GM12878 (cell line): ENCODE measurements at regions of chrX and their contacts with region 1.

Region 1: DNA sequence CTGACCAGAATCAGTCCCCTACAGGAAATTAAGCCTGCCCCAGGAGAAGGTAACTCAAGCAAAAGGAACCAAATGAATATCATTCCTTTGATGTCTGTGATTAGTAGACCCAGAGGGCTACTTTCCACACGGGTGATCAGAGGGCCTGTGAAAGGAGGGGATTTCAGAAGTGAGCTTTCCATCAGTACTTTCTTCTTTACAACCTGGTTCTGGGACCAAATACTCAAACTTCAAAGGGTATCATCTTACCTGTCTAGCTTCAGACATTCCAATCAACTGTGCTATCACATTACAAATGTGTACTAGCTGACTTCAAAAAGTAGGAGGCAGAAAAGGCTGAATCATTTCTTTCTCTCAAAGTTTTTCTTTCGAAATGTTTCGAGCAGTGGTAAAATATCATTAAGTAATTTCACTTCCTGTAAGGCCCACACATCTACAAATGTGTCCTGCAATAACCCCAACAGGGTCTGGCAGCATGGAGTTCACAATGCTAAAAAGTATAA is 23.9 kb downstream of the ACSL4 start:
- DNase-seq: peak; percentile 60
- ATAC-seq: peak; percentile 82
- H3K4me3 ChIP-seq: 0 out of 2 replicates have a peak overlapping the region, but pooled peaks have one; percentile 29
- H3K27ac ChIP-seq: peak overlapping the region; percentile 71
- H3K4me1 ChIP-seq: peaks cover 9% of the 10 kb centered on the region
- H3K27me3 ChIP-seq: no peaks in the 10 kb centered on the region
- CTCF ChIP-seq: no peak; a peak in 1 of 6 replicates
- EP300 ChIP-seq: peak in 1 of 2 experiments; percentile 59; a peak in 2 of 4 replicates
- POLR2A ChIP-seq: no peak
- RAD21 ChIP-seq: no peak

Region 2: GRCh38 chrX:109679820-109680219 is 29.4 kb before region 1 on chrX:
- CTCF ChIA-PET with region 1: interaction called, 3 read pairs
- POLR2A ChIA-PET with region 1: no interaction called
- RAD21 ChIA-PET with region 1: no interaction called
- SMC1A ChIA-PET with region 1: interaction called, 12 read pairs
- in situ Hi-C with region 1: no loop called
- intact Hi-C with region 1: no loop called
- DNase-seq: no peak
- ATAC-seq: no peak
- H3K4me3 ChIP-seq: no peak overlapping the region
- H3K27ac ChIP-seq: no peak overlapping the region
- H3K4me1 ChIP-seq: no peaks in the 10 kb centered on the region
- H3K27me3 ChIP-seq: no peaks in the 10 kb centered on the region
- CTCF ChIP-seq: no peak
- EP300 ChIP-seq: no peak
- POLR2A ChIP-seq: no peak
- RAD21 ChIP-seq: no peak

Region 3: GRCh38 chrX:109732780-109733657 is 23.8 kb after region 1 on chrX and contains the start of gene ACSL4:
- CTCF ChIA-PET with region 1: interaction called, 15 read pairs
- POLR2A ChIA-PET with region 1: interaction called, 8 read pairs
- RAD21 ChIA-PET with region 1: interaction called, 28 read pairs
- SMC1A ChIA-PET with region 1: interaction called, 18 read pairs
- in situ Hi-C with region 1: no loop called
- intact Hi-C with region 1: no loop called
- DNase-seq: no peak
- ATAC-seq: peak; percentile 91
- H3K4me3 ChIP-seq: peak within 1 kb of the TSS; percentile 69
- H3K27ac ChIP-seq: peak within 1 kb of the TSS; percentile 88
- H3K4me1 ChIP-seq: no peaks in the 10 kb centered on the region
- H3K27me3 ChIP-seq: no peaks in the 10 kb centered on the region
- CTCF ChIP-seq: no peak
- EP300 ChIP-seq: no peak
- POLR2A ChIP-seq: peak; percentile 84
- RAD21 ChIP-seq: no peak
- polyA plus RNA-seq, gene ACSL4: 20.7 to 23.6 TPM

Region 4: GRCh38 chrX:109840585-109840984 is 131.4 kb after region 1 on chrX:
- CTCF ChIA-PET with region 1: interaction called, 6 read pairs
- POLR2A ChIA-PET with region 1: interaction called, 3 read pairs
- RAD21 ChIA-PET with region 1: interaction called, 20 read pairs
- SMC1A ChIA-PET with region 1: interaction called, 11 read pairs
- in situ Hi-C with region 1: no loop called
- intact Hi-C with region 1: no loop called
- DNase-seq: no peak
- ATAC-seq: peak; percentile 36
- H3K4me3 ChIP-seq: no peak overlapping the region
- H3K27ac ChIP-seq: no peak overlapping the region
- H3K4me1 ChIP-seq: peaks cover 6% of the 10 kb centered on the region; the same call in 1 of the 2 replicates
- H3K27me3 ChIP-seq: no peaks in the 10 kb centered on the region
- CTCF ChIP-seq: no peak
- EP300 ChIP-seq: no peak
- POLR2A ChIP-seq: no peak
- RAD21 ChIP-seq: no peak

Region 5: DNA sequence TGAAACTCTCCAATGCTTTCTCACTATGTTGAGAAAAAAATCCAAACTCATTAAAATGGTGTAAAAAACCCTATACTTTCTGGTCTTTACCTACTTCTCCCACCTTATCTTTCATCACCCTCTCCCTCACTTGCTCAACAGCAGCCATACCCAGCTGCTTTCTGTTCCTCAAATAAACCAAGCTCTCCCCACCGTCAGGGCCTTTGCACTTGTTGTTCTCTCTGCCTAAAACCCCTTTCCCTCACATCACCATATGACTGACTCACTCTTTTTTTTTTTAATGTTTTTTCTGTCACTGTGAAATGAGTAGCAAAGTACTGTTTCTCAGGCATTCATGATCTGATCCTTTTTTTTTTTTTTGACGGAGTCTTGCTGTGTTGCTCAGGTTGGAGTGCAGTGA is 171.4 kb after region 1 on chrX:
- CTCF ChIA-PET with region 1: interaction called, 98 read pairs
- POLR2A ChIA-PET with region 1: interaction called, 4 read pairs
- RAD21 ChIA-PET with region 1: interaction called, 20 read pairs
- SMC1A ChIA-PET with region 1: interaction called, 35 read pairs
- in situ Hi-C with region 1: no loop called
- intact Hi-C with region 1: no loop called
- DNase-seq: peak; percentile 39
- ATAC-seq: peak; percentile 98
- H3K4me3 ChIP-seq: no peak overlapping the region
- H3K27ac ChIP-seq: no peak overlapping the region
- H3K4me1 ChIP-seq: no peaks in the 10 kb centered on the region
- H3K27me3 ChIP-seq: no peaks in the 10 kb centered on the region
- CTCF ChIP-seq: no peak
- EP300 ChIP-seq: peak in 1 of 2 experiments; percentile 28; a peak in 1 of 4 replicates
- POLR2A ChIP-seq: no peak
- RAD21 ChIP-seq: no peak